AG04449 (cell line): ENCODE measurements at regions of chr6 and their contacts with region 1.

Region 1: DNA sequence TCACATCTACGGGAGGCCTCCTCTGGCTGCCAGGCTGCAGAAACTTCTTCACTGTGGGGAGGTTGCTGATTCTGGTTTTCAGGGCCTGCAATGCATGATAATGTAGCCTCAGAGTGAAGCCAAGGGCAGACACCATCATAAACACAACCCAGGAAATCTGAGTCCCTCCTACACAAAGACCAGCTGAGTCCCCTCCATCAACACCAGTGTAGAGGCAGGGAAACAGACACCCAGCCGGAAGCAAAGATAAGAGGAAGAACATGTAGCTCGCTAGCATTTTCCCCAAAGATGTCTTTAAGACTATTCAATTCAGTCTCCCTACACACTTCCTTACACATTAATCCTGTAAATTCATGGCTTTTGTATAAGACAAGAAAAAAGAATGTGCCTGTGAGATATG is 23.6 kb downstream of the GSTA2 start:
- DNase-seq: no peak
- H3K4me3 ChIP-seq: no peak overlapping the region
- CTCF ChIP-seq: no peak

Region 2: DNA sequence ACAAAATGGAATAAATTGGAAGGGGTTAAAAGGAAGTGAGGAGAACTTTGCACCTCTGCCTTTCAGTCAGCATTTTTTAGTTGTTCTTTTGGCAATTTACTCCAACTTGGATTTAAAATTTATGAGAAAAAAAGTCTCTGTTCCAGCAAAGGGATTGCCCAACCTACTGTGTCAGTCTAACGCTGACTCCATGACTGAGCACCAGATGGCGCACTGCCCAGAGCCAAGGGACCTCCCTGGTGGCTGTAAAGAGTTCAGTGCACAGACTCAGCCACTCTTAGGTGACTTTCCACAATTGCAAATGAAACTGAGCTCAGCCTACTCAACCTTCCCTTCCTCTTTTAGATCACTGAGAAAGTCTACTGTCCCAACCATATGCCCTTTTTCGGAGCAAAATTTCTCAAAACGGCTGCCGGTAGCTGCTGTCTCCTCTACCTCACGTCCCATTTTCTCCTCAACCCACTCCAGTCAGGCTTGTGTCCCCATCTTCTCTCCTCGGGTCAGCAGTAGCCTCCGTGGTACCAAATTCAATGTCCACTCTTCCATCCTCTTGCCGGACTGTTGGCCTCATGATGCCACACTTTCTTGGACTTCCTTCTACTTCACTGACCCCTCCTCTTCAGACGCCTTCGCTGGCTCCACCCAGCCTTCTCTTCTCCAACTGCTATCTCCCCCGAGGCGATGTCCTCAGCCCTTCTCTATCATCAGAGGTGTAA is 15.1 kb before region 1 on chr6:
- CTCF ChIA-PET with region 1: interaction called, 13 read pairs
- POLR2A ChIA-PET with region 1: interaction called, 3 read pairs
- DNase-seq: no peak
- H3K4me3 ChIP-seq: no peak overlapping the region
- CTCF ChIP-seq: peak; percentile 77